ENCODE measurements at regions of chr10 and their contacts with region 1.

Region 1: DNA sequence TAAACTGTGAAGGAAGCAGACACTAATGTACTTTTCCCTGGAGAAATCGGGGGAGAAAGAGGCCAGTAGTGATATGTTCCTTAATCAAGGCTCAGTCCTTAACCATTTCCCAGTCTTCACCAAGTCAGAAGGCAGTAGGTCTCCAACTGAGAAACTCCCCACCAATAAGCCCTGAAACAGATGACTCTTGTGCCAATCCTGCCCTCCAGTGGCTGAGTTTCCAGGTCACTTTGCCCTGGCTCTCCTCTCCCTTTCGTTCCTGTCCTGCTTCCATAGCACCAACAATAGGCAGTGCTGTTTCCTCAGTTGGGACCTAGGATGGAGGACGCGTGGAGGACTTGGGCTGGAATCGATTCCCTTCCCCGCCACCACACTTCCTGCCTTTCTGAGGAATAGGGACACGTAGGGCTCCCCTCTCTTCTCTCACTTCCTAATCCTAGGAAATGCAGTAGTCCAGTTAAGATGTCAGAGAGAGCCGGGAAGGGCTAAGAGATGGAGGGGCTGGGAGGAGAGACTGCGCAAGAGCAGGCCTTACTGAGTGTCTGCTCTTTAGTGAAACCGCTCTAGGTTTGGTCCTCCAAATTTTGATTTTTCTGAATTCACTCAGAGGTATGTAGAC is 23.4 kb downstream of the ATOH7 start:
- DNase-seq: peak in 2 of 14 experiments; percentile 11 to 22
- ATAC-seq: no peak
- H3K4me3 ChIP-seq: no peak overlapping the region
- H3K4me3 Mint-ChIP-seq: no peak overlapping the region
- H3K27ac ChIP-seq: no peak overlapping the region
- H3K27ac Mint-ChIP-seq: no peak overlapping the region
- H3K4me1 ChIP-seq: no peaks in the 10 kb centered on the region
- H3K4me1 Mint-ChIP-seq: no peaks in the 10 kb centered on the region
- H3K27me3 ChIP-seq: peaks cover 0 to 9% of the 10 kb centered on the region in 2 experiments
- H3K27me3 Mint-ChIP-seq: peaks cover 25% of the 10 kb centered on the region
- CTCF ChIP-seq: no peak

Region 2: DNA sequence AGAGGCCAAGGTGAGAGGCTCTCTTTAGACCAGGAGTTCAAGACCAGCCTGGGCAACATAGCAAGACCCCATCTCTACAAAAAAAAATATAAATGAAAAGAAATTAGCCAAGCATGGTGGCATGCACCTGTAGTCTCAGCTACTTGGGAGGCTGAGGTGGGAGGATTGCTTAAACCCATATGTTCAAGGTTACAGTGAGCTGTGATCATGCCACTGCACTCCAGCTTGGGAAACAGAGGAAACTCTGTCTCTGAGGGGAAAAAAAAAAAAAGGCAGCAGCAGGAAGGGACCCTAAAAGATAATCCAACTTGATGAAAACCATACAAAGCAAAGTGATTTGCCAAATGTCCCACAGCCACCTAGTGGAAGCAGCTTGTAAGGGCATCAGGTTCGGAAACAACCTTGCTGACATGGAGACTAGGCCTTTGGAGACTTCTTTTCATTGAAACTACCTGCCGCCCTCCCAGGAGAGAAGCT is 139.8 kb after region 1 on chr10:
- CTCF ChIA-PET with region 1: interaction called, 18 read pairs
- POLR2A ChIA-PET with region 1: no interaction called
- intact Hi-C with region 1: loop called (anchors 1 kb)
- DNase-seq: peak; percentile 14 to 76 (median 30)
- ATAC-seq: peak; percentile 86
- H3K4me3 ChIP-seq: no peak overlapping the region
- H3K4me3 Mint-ChIP-seq: no peak overlapping the region
- H3K27ac ChIP-seq: no peak overlapping the region
- H3K27ac Mint-ChIP-seq: peak overlapping the region; percentile 73
- H3K4me1 ChIP-seq: peaks cover 3% of the 10 kb centered on the region
- H3K4me1 Mint-ChIP-seq: peaks cover 6% of the 10 kb centered on the region
- H3K27me3 ChIP-seq: no peaks in the 10 kb centered on the region
- H3K27me3 Mint-ChIP-seq: no peaks in the 10 kb centered on the region
- CTCF ChIP-seq: peak; percentile 76